ENCODE measurements at regions of chr19 and their contacts with region 1.

Region 1: DNA sequence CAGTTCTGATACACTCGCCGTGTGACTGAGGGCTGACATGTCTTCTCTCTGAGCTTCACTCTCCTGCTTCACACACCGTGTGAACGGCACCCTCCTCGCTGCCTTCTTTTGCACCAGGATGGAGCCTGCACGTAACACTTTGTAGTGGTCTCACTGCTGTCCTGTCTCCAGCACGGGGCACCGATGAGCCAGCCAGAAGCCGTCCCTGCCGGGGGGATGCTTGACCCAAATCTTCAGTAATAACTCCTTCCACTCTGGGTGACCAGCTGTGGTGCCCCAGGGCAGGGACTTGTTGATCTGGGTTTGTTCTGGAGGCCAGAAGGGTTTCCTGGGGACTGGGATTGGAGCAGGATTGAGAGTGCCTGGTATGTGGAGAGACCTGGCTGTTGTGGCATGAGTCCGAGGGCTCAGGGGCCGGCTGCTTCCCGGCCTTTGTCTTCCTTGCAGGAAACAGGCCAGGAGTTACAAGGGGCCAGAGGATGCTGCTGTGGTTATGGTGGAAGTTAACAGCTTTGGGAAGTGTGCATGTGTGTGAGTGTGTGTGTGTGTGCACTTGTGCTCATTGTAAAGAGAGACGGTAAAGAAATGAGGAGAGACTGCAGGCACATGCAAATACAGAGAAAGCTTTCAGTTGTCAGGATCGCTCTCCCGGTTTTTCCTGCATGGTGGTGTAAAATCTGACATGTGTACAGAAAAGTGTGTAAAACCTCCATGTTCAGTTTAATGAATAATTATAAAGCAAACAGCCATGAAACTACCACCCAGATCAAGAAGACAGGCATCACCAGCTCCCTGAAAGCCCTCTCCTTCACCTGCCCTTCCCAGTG is 18.9 kb downstream of the PAK4 start:
- DNase-seq: no peak
- ATAC-seq: peak; percentile 44
- H3K4me3 ChIP-seq: peak overlapping the region; percentile 52 to 67 (median 58)
- H3K27ac ChIP-seq: peak overlapping the region; percentile 89
- H3K4me1 ChIP-seq: peaks cover 78% of the 10 kb centered on the region
- H3K27me3 ChIP-seq: no peaks in the 10 kb centered on the region
- CTCF ChIP-seq: no peak; the same call in 1 of the 2 replicates
- EP300 ChIP-seq: no peak
- POLR2A ChIP-seq: no peak
- RAD21 ChIP-seq: no peak

Region 2: DNA sequence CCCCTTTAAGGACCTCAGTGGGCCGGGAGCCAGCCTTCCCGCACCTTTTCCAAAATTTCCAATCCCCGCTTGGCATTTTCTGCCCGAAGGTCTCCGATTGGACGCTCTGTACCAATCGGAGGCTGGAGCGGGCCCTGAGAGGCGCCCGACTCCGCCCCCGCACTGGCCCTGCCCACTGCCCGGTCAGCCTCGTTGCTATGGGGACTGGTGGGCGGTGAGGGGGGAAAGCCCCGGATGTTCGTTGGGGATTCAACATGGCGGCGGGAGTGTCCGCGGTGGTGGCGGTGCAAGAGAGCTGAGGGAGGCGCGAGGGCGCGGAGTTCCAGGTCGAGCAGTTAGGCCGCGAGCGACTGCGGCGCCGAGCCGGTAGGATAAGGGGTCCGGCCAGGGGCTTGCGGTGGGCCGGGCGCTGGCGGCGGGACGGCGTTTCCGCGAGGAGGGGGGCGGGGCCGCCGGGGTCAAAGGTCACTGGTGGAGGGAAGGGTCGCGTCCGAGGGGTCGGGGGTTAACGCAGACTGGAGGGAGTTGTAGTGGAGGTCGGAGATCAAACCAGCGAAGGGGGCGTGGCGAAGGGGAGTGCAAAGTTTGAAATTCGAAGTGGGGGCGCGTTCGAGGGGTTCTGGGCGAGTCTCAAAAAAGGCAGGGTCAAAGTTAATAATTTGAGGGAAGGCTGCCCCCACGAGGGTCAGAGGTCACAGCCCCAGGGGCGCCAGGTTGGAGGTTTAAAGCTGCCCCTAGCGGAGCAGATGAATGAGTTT is 18.7 kb before region 1 on chr19 and contains the start of gene PAK4:
- CTCF ChIA-PET with region 1: interaction called, 14 read pairs
- POLR2A ChIA-PET with region 1: interaction called, 35 read pairs
- in situ Hi-C with region 1: no loop called
- intact Hi-C with region 1: loop called (anchors 1 kb)
- DNase-seq: peak; percentile 94
- ATAC-seq: peak; percentile 85
- H3K4me3 ChIP-seq: peak within 1 kb of the TSS; percentile 80 to 87 (median 85)
- H3K27ac ChIP-seq: peak within 1 kb of the TSS; percentile 99
- H3K4me1 ChIP-seq: peaks cover 59% of the 10 kb centered on the region
- H3K27me3 ChIP-seq: no peaks in the 10 kb centered on the region
- CTCF ChIP-seq: no peak; the same call in 1 of the 2 replicates
- EP300 ChIP-seq: no peak
- POLR2A ChIP-seq: peak; percentile 53 to 81; a peak in 2 of 4 replicates
- RAD21 ChIP-seq: no peak
- total RNA-seq, gene PAK4: 9.5 and 11.6 TPM in 2 replicates

Region 3: DNA sequence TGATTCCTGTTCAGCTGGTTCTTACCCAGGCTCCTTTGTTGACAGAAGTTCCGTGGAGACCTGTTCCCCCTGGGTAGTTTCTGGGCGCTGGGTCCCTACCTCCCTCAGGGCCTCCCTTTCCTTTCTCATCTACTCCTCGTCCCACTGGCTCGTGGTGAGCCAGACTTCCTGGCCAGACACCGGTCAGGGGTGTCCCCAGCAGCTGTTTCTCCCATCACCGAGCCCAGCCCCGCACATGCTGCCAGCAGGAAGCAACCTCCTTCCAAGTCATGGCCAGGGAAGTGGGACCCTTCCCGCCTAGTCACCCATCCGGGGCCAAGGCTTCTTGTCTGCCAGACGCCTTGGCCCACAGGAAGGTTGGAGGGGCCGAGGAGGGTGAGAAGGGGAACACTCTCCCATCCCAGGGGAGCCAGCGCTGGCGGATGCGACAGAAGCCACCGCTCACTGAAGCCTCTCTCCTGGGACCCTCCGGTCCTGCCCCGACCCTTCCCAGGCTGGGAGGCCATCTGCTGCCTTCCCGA is 13.2 kb before region 1 on chr19:
- CTCF ChIA-PET with region 1: no interaction called
- POLR2A ChIA-PET with region 1: interaction called, 35 read pairs
- in situ Hi-C with region 1: no loop called
- intact Hi-C with region 1: loop called (anchors 1 kb)
- DNase-seq: no peak
- ATAC-seq: no peak
- H3K4me3 ChIP-seq: no peak overlapping the region
- H3K27ac ChIP-seq: no peak overlapping the region
- H3K4me1 ChIP-seq: peaks cover 28% of the 10 kb centered on the region
- H3K27me3 ChIP-seq: no peaks in the 10 kb centered on the region
- CTCF ChIP-seq: no peak
- EP300 ChIP-seq: no peak
- POLR2A ChIP-seq: no peak
- RAD21 ChIP-seq: no peak

Region 4: DNA sequence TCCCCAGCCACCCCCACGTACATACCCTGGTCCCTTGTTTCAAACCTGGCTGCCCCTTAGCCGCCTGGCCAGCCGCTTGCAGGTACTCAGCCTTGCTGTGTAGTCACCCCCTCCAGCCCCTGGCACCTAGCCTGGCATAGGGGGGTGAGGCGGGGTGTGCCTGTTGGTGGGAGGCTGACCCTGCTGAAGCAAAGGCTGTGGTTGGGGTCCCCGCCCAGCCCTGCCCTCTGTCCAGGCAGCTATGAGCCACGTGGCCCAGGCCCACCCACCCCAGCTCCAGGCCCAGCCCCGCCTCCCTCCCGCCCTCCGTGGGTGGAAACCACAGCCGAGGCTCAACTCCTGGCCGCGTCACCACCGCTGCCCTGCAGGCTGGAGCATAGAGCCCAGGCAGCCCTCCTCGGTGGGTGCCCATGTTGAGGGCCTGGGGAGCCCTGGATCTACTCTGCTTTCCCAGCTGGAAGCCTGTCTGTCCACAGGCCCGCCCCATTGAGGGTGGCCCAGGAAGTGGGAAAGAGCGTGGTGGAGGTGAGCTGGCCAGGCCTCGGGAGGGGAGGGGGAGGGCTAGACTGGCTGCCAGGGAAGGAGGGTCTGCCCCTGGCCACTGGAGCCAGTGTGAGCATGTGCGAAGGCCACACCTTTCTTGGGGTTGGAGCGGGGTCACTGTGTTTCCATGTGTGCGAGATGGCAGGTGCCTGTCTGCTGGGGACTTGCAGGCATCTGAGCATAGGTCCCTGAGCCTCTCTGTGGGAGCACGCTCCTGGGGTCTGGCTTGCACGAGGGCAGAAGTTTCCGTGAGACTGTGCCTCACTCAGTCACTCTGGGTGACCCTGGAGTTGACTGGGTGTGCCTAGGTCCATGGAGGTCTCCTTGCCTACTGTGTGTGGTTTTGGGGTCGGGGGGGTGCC is 12.1 kb after region 1 on chr19:
- CTCF ChIA-PET with region 1: no interaction called
- POLR2A ChIA-PET with region 1: interaction called, 26 read pairs
- in situ Hi-C with region 1: no loop called
- intact Hi-C with region 1: no loop called
- DNase-seq: no peak
- ATAC-seq: peak; percentile 17
- H3K4me3 ChIP-seq: peak overlapping the region in 1 of 3 experiments; percentile 45; a peak in 2 of 6 replicates
- H3K27ac ChIP-seq: peak overlapping the region; percentile 66
- H3K4me1 ChIP-seq: peaks cover 52% of the 10 kb centered on the region
- H3K27me3 ChIP-seq: no peaks in the 10 kb centered on the region
- CTCF ChIP-seq: no peak
- EP300 ChIP-seq: no peak
- POLR2A ChIP-seq: no peak
- RAD21 ChIP-seq: no peak

Region 5: DNA sequence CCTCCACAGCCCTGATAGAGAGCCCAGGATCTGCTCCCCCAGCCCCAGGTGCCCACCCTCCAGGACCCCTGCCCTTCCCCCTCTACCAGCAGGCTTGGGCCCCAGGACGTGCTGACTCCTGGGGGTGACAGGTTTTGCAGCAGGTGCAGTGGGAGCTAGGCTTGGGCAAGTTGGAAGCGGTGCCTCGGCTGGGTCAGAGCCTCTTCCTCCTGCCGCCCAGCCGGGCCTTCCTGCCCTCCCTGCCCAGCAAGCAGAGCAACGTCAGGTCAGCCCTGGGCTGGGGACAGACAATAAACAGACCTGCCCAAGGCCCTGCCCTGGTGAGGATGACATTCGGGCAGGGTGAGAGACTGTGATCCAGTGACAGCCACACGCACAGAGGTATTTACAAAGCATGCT is 43.1 kb after region 1 on chr19:
- CTCF ChIA-PET with region 1: no interaction called
- POLR2A ChIA-PET with region 1: no interaction called
- in situ Hi-C with region 1: no loop called
- intact Hi-C with region 1: loop called (anchors 1 kb)
- DNase-seq: no peak
- ATAC-seq: peak; percentile 46
- H3K4me3 ChIP-seq: no peak overlapping the region
- H3K27ac ChIP-seq: no peak overlapping the region
- H3K4me1 ChIP-seq: peaks cover 10% of the 10 kb centered on the region; the same call in 1 of the 2 replicates
- H3K27me3 ChIP-seq: peaks cover 0 to 7% of the 10 kb centered on the region in 2 experiments; a peak in 1 of 5 replicates
- CTCF ChIP-seq: no peak
- EP300 ChIP-seq: no peak
- POLR2A ChIP-seq: no peak
- RAD21 ChIP-seq: no peak